ENCODE measurements at regions of chr5 and their contacts with region 1.

Region 1: DNA sequence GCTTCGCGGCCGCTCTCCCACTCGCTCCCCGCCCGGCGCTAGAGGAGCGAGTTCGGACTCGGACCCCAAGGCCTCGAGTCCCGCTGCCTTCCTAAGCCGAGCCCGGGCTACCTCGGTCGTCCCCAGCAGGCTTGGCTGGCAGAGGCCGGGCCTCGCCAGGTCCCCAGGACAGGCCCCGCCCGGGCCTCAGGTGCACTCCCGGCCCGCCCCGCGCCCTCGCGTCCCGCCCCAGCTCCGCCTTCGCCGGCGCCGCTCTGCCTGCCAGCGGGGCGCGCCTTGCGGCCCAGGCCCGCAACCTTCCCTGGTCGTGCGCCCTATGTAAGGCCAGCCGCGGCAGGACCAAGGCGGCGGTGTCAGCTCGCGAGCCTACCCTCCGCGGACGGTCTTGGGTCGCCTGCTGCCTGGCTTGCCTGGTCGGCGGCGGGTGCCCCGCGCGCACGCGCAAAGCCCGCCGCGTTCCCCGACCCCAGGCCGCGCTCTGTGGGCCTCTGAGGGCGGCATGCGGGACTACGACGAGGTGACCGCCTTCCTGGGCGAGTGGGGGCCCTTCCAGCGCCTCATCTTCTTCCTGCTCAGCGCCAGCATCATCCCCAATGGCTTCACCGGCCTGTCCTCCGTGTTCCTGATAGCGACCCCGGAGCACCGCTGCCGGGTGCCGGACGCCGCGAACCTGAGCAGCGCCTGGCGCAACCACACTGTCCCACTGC is at the start of gene SLC22A5:
- DNase-seq: peak; percentile 84
- ATAC-seq: peak; percentile 95
- H3K4me3 Mint-ChIP-seq: peak within 1 kb of the TSS; percentile 86
- H3K27ac Mint-ChIP-seq: peak within 1 kb of the TSS; percentile 74
- H3K4me1 Mint-ChIP-seq: peaks cover 18% of the 10 kb centered on the region
- H3K27me3 Mint-ChIP-seq: no peaks in the 10 kb centered on the region
- CTCF ChIP-seq: no peak
- total RNA-seq, gene SLC22A5: 5.4 and 6.6 TPM in 2 replicates

Region 2: GRCh38 chr5:132272311-132273210 is 97.1 kb before region 1 on chr5:
- CTCF ChIA-PET with region 1: interaction called, 4 read pairs
- POLR2A ChIA-PET with region 1: no interaction called
- intact Hi-C with region 1: loop called (anchors 1 kb)
- DNase-seq: peak; percentile 66
- ATAC-seq: peak; percentile 51
- H3K4me3 Mint-ChIP-seq: peak overlapping the region; percentile 4
- H3K27ac Mint-ChIP-seq: no peak overlapping the region
- H3K4me1 Mint-ChIP-seq: peaks cover 12% of the 10 kb centered on the region
- H3K27me3 Mint-ChIP-seq: peaks cover 11% of the 10 kb centered on the region
- CTCF ChIP-seq: peak; percentile 96

Region 3: GRCh38 chr5:132327252-132327955 is 42.2 kb before region 1 on chr5:
- CTCF ChIA-PET with region 1: no interaction called
- POLR2A ChIA-PET with region 1: no interaction called
- intact Hi-C with region 1: no loop called
- DNase-seq: no peak
- ATAC-seq: no peak
- H3K4me3 Mint-ChIP-seq: no peak overlapping the region
- H3K27ac Mint-ChIP-seq: no peak overlapping the region
- H3K4me1 Mint-ChIP-seq: no peaks in the 10 kb centered on the region
- H3K27me3 Mint-ChIP-seq: no peaks in the 10 kb centered on the region
- CTCF ChIP-seq: no peak

Region 4: GRCh38 chr5:132354381-132355139 is 15.1 kb before region 1 on chr5:
- CTCF ChIA-PET with region 1: interaction called, 9 read pairs
- POLR2A ChIA-PET with region 1: interaction called, 55 read pairs
- intact Hi-C with region 1: loop called (anchors 1 kb)
- DNase-seq: no peak
- ATAC-seq: no peak
- H3K4me3 Mint-ChIP-seq: peak overlapping the region; percentile 24
- H3K27ac Mint-ChIP-seq: peak overlapping the region; percentile 31
- H3K4me1 Mint-ChIP-seq: peaks cover 19% of the 10 kb centered on the region
- H3K27me3 Mint-ChIP-seq: no peaks in the 10 kb centered on the region
- CTCF ChIP-seq: no peak

Measured in activated B cell treated with CpG ODN at 0.5 μM for 24 hours (primary cell).